GM13977 (cell line): ENCODE measurements at regions of chr2 and their contacts with region 1.

Region 1: DNA sequence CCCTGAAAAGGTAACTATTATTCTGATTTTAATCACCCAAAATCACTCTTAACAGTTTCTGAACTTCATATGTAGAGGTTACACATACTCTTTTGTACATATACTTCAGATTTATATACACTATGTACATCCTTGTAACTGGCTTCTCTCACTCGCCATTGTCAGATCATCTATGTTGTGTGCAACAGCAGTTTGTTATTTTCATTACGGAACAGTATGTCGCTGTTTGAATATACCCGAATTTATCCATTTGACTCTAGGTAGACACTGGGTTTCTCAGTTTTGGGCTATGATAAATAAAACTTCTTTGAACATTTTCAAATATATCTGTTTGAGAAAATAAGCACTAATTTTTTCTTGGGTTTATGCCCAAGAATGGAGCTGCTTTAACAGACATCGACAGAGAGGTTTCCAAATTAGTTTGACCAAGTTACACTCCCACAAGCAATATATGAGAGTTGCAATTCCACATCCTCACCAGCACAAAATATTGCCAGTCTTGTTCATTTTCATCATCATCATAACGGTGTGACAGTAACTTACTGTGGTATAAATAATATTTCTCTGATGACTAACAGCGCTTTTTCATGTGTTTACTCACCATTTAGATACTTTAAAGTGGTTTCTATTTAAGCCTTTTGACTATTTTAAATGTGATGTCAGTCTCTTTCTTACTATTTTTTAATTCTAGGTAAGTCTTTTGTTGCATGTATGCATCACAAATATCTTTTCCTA is 80.9 kb downstream of the SMC6 start:
- DNase-seq: no peak
- CTCF ChIP-seq: no peak

Region 2: DNA sequence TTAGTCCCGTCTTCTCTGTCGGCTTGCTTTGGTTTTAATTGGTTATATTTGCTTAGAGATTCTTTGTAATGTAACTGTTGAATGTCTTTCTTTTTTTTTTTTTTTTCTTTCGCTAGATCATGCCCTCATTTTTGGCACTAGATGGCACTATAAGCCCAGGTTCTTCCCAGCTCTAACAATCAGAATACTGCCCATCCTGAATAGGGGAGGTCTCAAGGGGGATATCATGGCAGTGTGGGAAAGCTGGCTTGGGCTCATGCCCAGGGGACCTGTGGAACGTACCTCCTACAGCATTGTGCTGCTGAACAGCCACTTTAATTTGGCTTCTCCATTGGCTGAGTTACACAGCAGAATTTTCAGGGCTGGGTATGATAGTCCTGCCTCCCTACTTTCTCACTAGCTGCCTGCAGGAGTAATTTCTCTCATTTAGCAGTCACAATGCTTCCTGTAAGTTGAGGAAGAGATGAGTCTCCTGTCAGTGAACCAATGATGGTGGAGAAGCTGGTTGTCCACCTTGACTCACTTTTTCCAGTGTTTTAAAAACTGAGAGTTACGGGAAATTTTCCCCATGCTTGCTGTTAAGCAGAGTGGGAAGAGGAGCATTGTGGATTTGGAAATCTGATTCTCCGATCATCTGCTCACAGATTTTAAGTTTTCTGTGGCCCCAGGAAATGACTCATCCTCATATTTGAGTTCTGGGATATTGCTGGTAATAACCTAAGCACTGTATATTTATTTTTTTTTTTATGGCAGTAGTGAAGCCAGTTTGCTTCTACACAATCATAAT is 201.7 kb before region 1 on chr2:
- in situ Hi-C with region 1: loop called (anchors 10 kb)
- DNase-seq: no peak
- CTCF ChIP-seq: peak; percentile 51